ENCODE measurements at regions of chr9 and their contacts with region 1.

Region 1: DNA sequence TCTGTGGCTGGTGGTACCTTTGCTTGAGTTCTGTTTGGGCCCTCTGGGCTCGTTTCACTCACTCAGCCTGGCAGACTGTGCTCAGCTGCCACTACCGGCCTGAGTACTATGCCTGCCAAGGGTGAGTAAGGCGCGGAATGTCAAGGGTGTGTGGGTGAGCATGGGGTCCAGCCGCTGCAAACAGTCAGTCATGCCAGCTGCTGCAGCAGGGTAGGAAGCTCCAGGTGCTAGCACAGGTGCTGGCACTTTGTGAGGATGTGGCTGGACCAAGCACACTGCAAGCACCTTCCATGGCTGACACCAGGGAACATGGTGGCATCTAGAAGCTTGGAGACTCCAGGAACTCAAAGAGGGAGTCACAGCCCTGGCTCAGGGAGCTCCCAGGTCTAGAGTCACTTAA is 368.6 kb upstream of the ACO1 start:
- DNase-seq: no peak
- ATAC-seq: no peak
- H3K4me3 ChIP-seq: no peak overlapping the region
- H3K4me3 Mint-ChIP-seq: no peak overlapping the region
- H3K27ac ChIP-seq: no peak overlapping the region
- H3K27ac Mint-ChIP-seq: no peak overlapping the region
- H3K4me1 ChIP-seq: no peaks in the 10 kb centered on the region
- H3K4me1 Mint-ChIP-seq: no peaks in the 10 kb centered on the region
- H3K27me3 ChIP-seq: no peaks in the 10 kb centered on the region
- H3K27me3 Mint-ChIP-seq: no peaks in the 10 kb centered on the region
- CTCF ChIP-seq: no peak

Region 2: GRCh38 chr9:31969552-31969951 is 46.2 kb before region 1 on chr9:
- intact Hi-C with region 1: loop called (anchors 10 kb)
- DNase-seq: no peak
- ATAC-seq: no peak
- H3K4me3 ChIP-seq: no peak overlapping the region
- H3K4me3 Mint-ChIP-seq: no peak overlapping the region
- H3K27ac ChIP-seq: no peak overlapping the region
- H3K27ac Mint-ChIP-seq: no peak overlapping the region
- H3K4me1 ChIP-seq: no peaks in the 10 kb centered on the region
- H3K4me1 Mint-ChIP-seq: no peaks in the 10 kb centered on the region
- H3K27me3 ChIP-seq: no peaks in the 10 kb centered on the region
- H3K27me3 Mint-ChIP-seq: no peaks in the 10 kb centered on the region
- CTCF ChIP-seq: no peak